Activated CD8-positive, alpha-beta memory T cell treated with anti-CD3 and anti-CD28 coated beads, Interleukin-2, amount 10 ng/mL, durations not matched to agents 7 days and 5 days (primary cell): ENCODE measurements at regions of chr1 and their contacts with region 1.

Region 1: GRCh38 chr1:222654849-222655248 is 37.0 kb downstream of the MIA3 start:
- DNase-seq: peak; percentile 88
- ATAC-seq: peak; percentile 83
- H3K4me3 Mint-ChIP-seq: peak overlapping the region; percentile 42
- H3K27ac Mint-ChIP-seq: peak overlapping the region; percentile 87
- H3K4me1 Mint-ChIP-seq: peaks cover 49% of the 10 kb centered on the region
- H3K27me3 Mint-ChIP-seq: no peaks in the 10 kb centered on the region

Region 2: GRCh38 chr1:222441066-222441465 is 213.8 kb before region 1 on chr1:
- CTCF ChIA-PET with region 1: no interaction called
- DNase-seq: no peak
- ATAC-seq: no peak
- H3K4me3 Mint-ChIP-seq: no peak overlapping the region
- H3K27ac Mint-ChIP-seq: no peak overlapping the region
- H3K4me1 Mint-ChIP-seq: no peaks in the 10 kb centered on the region
- H3K27me3 Mint-ChIP-seq: no peaks in the 10 kb centered on the region

Region 3: GRCh38 chr1:222617367-222617951 is 37.4 kb before region 1 on chr1:
- CTCF ChIA-PET with region 1: no interaction called
- DNase-seq: peak; percentile 96
- ATAC-seq: peak; percentile 97
- H3K4me3 Mint-ChIP-seq: peak overlapping the region; percentile 78
- H3K27ac Mint-ChIP-seq: peak overlapping the region; percentile 85
- H3K4me1 Mint-ChIP-seq: peaks cover 32% of the 10 kb centered on the region
- H3K27me3 Mint-ChIP-seq: peaks cover 28% of the 10 kb centered on the region

Region 4: DNA sequence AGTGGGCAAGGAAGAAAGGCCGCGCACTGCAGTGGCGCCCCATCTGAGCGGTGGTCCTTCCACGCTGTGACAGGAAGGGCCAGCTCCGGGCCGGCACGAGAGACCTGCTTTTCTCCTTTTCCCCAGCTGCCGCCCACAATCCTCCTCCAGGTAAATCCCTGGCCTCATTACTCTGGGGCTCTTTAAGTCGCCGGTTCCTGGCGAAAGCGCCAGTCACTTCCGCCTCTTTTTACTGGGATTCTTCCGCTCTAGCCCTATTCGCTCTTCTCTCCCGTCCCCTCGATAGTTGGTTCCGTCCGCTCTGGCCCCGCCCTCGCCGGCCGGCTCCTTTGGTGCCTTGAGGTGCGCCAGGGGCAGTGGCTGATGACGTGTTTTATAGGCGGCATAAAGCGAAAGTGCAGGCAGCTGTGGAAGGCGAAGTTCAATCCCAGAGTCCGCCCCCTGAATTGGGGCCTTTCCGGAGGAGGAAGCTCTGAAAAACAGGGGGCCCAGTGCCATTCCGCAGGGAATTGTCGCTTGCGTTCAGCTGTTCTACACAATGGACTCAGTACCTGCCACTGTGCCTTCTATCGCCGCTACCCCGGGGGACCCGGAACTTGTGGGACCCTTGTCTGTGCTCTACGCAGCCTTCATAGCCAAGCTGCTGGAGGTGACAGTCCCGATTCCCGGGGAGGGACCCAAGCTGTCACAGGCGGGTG is 10.8 kb before region 1 on chr1:
- CTCF ChIA-PET with region 1: interaction called, 22 read pairs
- DNase-seq: peak; percentile 99
- ATAC-seq: peak; percentile 99
- H3K4me3 Mint-ChIP-seq: peak overlapping the region; percentile 99
- H3K27ac Mint-ChIP-seq: peak overlapping the region; percentile 100
- H3K4me1 Mint-ChIP-seq: peaks cover 18% of the 10 kb centered on the region
- H3K27me3 Mint-ChIP-seq: no peaks in the 10 kb centered on the region